ENCODE measurements at regions of chr3 and their contacts with region 1.

Region 1: GRCh38 chr3:111668912-111669488 is 73.9 kb upstream of the ZBED2 start:
- H3K4me3 ChIP-seq: no peak overlapping the region
- H3K27ac ChIP-seq: no peak overlapping the region
- H3K4me1 ChIP-seq: peaks cover 4% of the 10 kb centered on the region; the same call in 1 of the 2 replicates
- CTCF ChIP-seq: 0 out of 2 replicates have a peak, but pooled peaks have one; percentile 36

Region 2: GRCh38 chr3:111577794-111578685 is 91.0 kb before region 1 on chr3:
- CTCF ChIA-PET with region 1: interaction called, 10 read pairs
- POLR2A ChIA-PET with region 1: no interaction called
- H3K4me3 ChIP-seq: no peak overlapping the region
- H3K27ac ChIP-seq: no peak overlapping the region
- H3K4me1 ChIP-seq: no peaks in the 10 kb centered on the region
- CTCF ChIP-seq: peak; percentile 26; the same call in 1 of the 2 replicates

Region 3: GRCh38 chr3:111681661-111682426 is 12.8 kb after region 1 on chr3:
- CTCF ChIA-PET with region 1: interaction called, 10 read pairs
- POLR2A ChIA-PET with region 1: no interaction called
- H3K4me3 ChIP-seq: no peak overlapping the region
- H3K27ac ChIP-seq: no peak overlapping the region
- H3K4me1 ChIP-seq: peaks cover 4% of the 10 kb centered on the region; the same call in 1 of the 2 replicates
- CTCF ChIP-seq: no peak

Region 4: DNA sequence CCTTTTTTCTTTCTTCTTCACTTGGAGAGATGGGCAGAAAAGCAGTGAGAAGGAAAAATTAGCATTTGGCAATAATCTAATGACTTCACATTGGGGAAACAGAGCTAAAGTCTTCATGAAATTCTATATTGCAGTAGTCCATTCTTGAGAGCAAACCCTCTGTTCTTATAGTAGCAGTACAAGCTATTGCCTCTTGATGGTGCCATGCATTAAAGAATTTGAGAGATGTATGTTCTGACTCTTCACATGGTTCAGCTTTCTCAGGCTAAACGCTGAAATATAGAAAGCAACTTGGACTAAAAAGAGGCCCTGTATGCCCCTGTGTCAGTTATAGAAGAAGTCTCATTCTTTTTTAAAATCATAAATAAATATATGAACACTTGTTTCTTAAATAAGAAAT is 226.1 kb after region 1 on chr3:
- CTCF ChIA-PET with region 1: interaction called, 10 read pairs
- POLR2A ChIA-PET with region 1: no interaction called
- H3K4me3 ChIP-seq: no peak overlapping the region
- H3K27ac ChIP-seq: no peak overlapping the region
- H3K4me1 ChIP-seq: no peaks in the 10 kb centered on the region
- CTCF ChIP-seq: no peak

Region 5: GRCh38 chr3:111967651-111968274 is 298.8 kb after region 1 on chr3:
- CTCF ChIA-PET with region 1: interaction called, 14 read pairs
- POLR2A ChIA-PET with region 1: no interaction called
- H3K4me3 ChIP-seq: no peak overlapping the region
- H3K27ac ChIP-seq: no peak overlapping the region
- H3K4me1 ChIP-seq: no peaks in the 10 kb centered on the region
- CTCF ChIP-seq: peak; percentile 55; the same call in 1 of the 2 replicates

Measured in HEK293 (cell line).